Transverse colon (tissue), 4 donors: ENCODE measurements at regions of chr17 and their contacts with region 1.

Region 1: GRCh38 chr17:18217412-18218015 is 7.9 kb upstream of the LLGL1 start:
- DNase-seq: peak; percentile 82
- H3K4me3 ChIP-seq: no peak overlapping the region
- H3K27ac ChIP-seq: no peak overlapping the region
- H3K4me1 ChIP-seq: peaks cover 0 to 3% (median 0%) of the 10 kb centered on the region in 4 donors
- H3K27me3 ChIP-seq: no peaks in the 10 kb centered on the region
- CTCF ChIP-seq: peak; percentile 81 to 95 (median 95)
- EP300 ChIP-seq: no peak
- POLR2A ChIP-seq: no peak

Region 2: DNA sequence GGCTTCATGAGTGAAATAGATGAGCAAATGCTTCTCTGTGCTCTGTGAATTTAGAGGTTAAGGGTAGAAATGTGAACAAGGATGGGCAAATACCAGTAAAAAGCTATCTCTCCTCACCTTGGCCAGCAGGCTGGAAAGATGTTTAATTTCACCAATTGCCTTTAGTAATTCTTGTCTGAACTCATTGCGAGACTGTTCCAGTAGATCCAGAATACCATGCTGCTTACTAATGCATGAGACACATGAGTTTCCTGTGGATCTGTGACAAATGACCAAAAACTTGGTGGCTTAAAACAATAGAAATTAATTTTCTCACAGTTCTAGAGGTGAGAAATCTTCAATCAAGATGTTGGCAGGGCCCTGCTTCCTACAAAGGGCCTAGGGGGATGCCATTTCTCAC is 1554.6 kb before region 1 on chr17:
- in situ Hi-C with region 1: no loop called
- intact Hi-C with region 1: no loop called
- DNase-seq: no peak
- H3K4me3 ChIP-seq: no peak overlapping the region
- H3K27ac ChIP-seq: no peak overlapping the region
- H3K4me1 ChIP-seq: peaks cover 0 to 9% (median 4%) of the 10 kb centered on the region in 4 donors
- H3K27me3 ChIP-seq: peaks cover 44% of the 10 kb centered on the region
- CTCF ChIP-seq: no peak
- EP300 ChIP-seq: no peak
- POLR2A ChIP-seq: no peak

Region 3: GRCh38 chr17:17641621-17642409 is 575.7 kb before region 1 on chr17:
- in situ Hi-C with region 1: no loop called
- intact Hi-C with region 1: no loop called
- DNase-seq: peak; percentile 82
- H3K4me3 ChIP-seq: no peak overlapping the region
- H3K27ac ChIP-seq: no peak overlapping the region
- H3K4me1 ChIP-seq: no peaks in the 10 kb centered on the region
- H3K27me3 ChIP-seq: no peaks in the 10 kb centered on the region
- CTCF ChIP-seq: peak; percentile 89 to 93 (median 92)
- EP300 ChIP-seq: no peak
- POLR2A ChIP-seq: no peak

Region 4: GRCh38 chr17:18141210-18141803 is 76.2 kb before region 1 on chr17:
- in situ Hi-C with region 1: loop called in 1 of 4 experiments (anchors 10 kb)
- intact Hi-C with region 1: no loop called
- DNase-seq: no peak
- H3K4me3 ChIP-seq: no peak overlapping the region
- H3K27ac ChIP-seq: no peak overlapping the region
- H3K4me1 ChIP-seq: no peaks in the 10 kb centered on the region
- H3K27me3 ChIP-seq: peaks cover 6% of the 10 kb centered on the region
- CTCF ChIP-seq: peak; percentile 55 to 71 (median 67)
- EP300 ChIP-seq: no peak
- POLR2A ChIP-seq: no peak

Region 5: GRCh38 chr17:18248300-18248731 is 30.8 kb after region 1 on chr17:
- in situ Hi-C with region 1: no loop called
- intact Hi-C with region 1: no loop called
- DNase-seq: peak; percentile 67
- H3K4me3 ChIP-seq: no peak overlapping the region
- H3K27ac ChIP-seq: peak overlapping the region in 2 of 4 donors; percentile 30 to 59
- H3K4me1 ChIP-seq: peaks cover 0 to 19% (median 4%) of the 10 kb centered on the region in 4 donors
- H3K27me3 ChIP-seq: no peaks in the 10 kb centered on the region
- CTCF ChIP-seq: peak; percentile 52 to 71 (median 60)
- EP300 ChIP-seq: no peak
- POLR2A ChIP-seq: no peak

Region 6: GRCh38 chr17:18278867-18279266 is 61.4 kb after region 1 on chr17:
- in situ Hi-C with region 1: loop called in 1 of 4 experiments (anchors 10 kb)
- intact Hi-C with region 1: no loop called
- DNase-seq: no peak
- H3K4me3 ChIP-seq: no peak overlapping the region
- H3K27ac ChIP-seq: no peak overlapping the region
- H3K4me1 ChIP-seq: no peaks in the 10 kb centered on the region
- H3K27me3 ChIP-seq: no peaks in the 10 kb centered on the region
- CTCF ChIP-seq: no peak
- EP300 ChIP-seq: no peak
- POLR2A ChIP-seq: no peak

Region 7: DNA sequence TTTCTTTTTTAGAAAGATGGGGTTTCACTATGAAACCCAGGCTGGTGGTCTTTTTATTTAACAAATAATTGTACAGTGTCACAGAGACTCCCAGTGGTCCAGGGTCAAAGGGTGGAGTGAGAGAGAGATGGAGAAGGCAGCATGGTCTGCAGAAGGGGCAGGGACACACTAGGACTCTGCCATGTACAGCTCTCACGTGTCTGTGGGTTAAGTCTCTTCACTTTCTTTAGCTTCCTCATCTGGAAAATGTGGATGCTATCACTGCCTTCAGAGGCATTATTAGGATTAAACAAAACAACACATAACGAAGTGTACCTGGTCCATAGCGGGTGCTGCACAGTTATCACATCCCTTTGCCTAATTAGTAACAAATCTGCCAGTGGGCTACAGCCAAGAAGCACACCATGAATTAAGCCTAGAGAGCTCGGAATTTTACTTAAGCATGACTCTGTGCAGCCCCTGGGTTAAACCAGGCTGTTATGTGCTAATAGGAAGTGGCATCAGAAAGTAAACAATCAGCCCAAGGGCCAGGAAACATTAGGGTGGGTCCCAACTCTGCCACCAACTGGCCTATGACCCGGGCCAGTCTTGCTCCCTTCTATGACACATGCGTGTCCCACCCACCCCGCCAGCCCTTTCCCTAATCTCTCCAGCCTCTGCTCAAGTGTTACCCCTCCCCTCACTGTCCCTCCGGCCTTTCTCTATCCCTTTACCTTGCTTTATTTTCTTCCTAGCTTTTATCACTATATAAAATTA is 83.4 kb after region 1 on chr17:
- in situ Hi-C with region 1: loop called in 1 of 4 experiments (anchors 10 kb)
- intact Hi-C with region 1: no loop called
- DNase-seq: no peak
- H3K4me3 ChIP-seq: no peak overlapping the region
- H3K27ac ChIP-seq: no peak overlapping the region
- H3K4me1 ChIP-seq: no peaks in the 10 kb centered on the region
- H3K27me3 ChIP-seq: no peaks in the 10 kb centered on the region
- CTCF ChIP-seq: no peak
- EP300 ChIP-seq: no peak
- POLR2A ChIP-seq: no peak